ENCODE measurements at regions of chr2 and their contacts with region 1.

Region 1: GRCh38 chr2:11863513-11864328 is 117.3 kb downstream of the LPIN1 start:
- DNase-seq: peak; percentile 82 to 88
- ATAC-seq: peak; percentile 86 to 96 (median 92)
- H3K4me3 ChIP-seq: no peak overlapping the region
- H3K27ac ChIP-seq: no peak overlapping the region
- H3K4me1 ChIP-seq: peaks cover 4% of the 10 kb centered on the region
- H3K27me3 ChIP-seq: no peaks in the 10 kb centered on the region
- CTCF ChIP-seq: peak; percentile 91

Region 2: GRCh38 chr2:12728221-12728777 is 864.6 kb after region 1 on chr2:
- intact Hi-C with region 1: loop called in 1 of 2 experiments (anchors 10 kb)
- DNase-seq: no peak
- ATAC-seq: no peak
- H3K4me3 ChIP-seq: no peak overlapping the region
- H3K27ac ChIP-seq: no peak overlapping the region
- H3K4me1 ChIP-seq: peaks cover 30% of the 10 kb centered on the region
- H3K27me3 ChIP-seq: no peaks in the 10 kb centered on the region
- CTCF ChIP-seq: no peak

Region 3: DNA sequence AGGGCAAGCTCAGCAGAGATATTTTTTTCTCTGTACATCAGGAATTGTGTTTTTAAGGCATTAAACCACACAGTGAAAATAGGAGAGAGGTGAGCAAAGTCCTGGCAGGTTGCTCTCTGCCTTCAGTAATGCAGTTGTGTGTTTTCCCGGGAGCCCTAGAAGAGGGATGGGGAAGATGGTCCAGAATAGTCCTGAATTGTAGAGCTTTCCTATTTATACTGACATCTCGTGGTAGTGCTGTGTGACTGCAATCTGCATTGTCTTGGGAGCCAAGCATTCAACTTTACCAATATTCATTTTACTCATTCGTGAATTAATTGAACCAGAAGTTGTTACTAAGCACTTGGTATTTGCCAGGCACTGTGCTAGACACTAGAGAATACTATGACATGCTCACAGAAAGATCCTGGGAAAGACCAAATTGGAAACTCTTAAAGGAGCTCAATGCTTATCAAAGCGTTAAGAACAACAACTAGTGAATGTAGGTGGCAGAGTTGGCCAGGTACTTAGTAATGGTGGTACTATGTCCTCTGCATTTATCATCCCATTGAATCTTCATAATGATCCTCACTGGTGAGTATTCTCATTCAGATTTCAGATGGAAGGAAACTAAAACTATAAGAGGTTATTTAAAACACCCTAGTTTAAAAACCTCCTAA is 1067.6 kb after region 1 on chr2:
- intact Hi-C with region 1: loop called (anchors 5 to 10 kb)
- DNase-seq: no peak
- ATAC-seq: peak; percentile 61 to 93 (median 87)
- H3K4me3 ChIP-seq: no peak overlapping the region
- H3K27ac ChIP-seq: no peak overlapping the region
- H3K4me1 ChIP-seq: no peaks in the 10 kb centered on the region
- H3K27me3 ChIP-seq: peaks cover 0 to 3% (median 0%) of the 10 kb centered on the region in 3 donors
- CTCF ChIP-seq: peak; percentile 91

Region 4: DNA sequence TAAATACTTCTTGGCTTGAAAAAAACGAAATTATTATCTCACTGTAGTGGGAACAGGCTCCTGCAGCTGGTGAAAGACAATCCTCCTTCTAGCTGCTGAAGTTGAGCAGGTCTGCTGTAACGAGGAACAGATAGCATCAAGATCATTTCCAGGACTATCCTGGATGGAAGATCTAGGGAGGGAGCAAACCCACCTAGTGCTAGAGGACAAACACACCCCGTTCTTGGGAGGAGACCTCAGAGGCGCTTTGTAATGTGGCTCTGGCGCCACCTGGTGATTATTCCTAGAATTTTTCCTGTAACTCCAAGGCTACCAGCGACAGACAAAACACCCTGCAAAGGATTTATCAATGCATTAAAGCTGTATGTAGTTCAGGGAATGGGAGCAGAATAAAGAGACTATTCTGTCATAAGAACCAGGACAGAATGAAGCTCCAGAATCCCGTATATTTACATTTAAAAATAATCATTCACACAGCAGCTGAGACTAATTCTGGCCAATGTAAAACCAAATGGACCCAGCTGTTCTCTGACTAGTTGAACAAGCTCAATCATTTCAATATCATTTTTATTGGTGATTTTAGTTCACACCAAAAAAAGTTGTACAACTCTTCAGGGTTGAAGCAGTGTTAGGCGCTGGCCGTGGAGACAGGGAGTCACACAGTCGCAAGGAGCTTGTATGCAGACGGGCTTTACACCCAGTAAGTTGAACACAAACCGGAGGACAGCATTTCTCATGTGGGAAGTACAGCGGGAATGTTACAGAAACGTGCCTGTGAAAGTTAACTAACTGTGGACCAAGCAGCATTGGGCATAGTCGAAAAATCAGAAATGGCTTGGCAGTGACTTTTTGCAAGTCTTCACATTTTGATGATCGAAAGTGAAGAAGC is 1143.4 kb after region 1 on chr2:
- intact Hi-C with region 1: loop called (anchors 5 kb)
- DNase-seq: peak in 1 of 2 donors; percentile 30
- ATAC-seq: peak; percentile 58 to 89 (median 80)
- H3K4me3 ChIP-seq: no peak overlapping the region
- H3K27ac ChIP-seq: no peak overlapping the region
- H3K4me1 ChIP-seq: no peaks in the 10 kb centered on the region
- H3K27me3 ChIP-seq: no peaks in the 10 kb centered on the region
- CTCF ChIP-seq: peak; percentile 87